Upper lobe of right lung (tissue), 1 donor: ENCODE measurements at regions of chr10 and their contacts with region 1.

Region 1: DNA sequence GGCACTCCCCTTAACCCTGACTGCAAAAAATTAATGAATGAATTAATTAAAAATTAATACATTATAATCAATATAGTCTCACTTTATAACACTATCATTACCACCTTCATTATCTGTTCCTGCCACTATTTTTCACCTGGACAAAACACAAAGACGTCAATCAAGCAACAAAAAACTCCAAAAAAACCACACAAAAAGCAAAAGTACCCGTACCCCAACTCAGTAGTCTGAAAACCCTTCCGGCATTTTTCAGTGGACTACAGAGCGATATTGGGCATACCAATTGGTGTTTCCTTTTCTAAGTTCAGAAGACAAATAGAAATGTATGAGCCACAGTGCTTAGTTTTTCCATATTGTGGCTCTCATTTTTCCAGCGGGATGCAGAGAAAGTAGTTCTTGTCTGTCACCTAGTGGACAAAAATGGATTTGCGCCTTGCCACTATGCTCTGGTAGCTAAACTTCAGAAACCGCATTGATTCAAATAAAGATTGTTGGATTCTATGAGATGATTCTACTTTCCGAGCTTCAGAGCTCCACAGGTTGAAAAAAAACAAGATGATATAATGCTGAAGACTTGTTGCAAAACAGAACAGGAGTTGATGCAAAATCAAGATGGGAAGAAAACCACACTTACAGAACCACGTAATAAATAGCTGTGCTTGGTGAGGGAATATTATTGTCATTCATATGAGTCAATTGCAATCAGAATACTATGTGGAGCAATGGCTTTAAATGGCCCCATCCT is 50.6 kb upstream of the ITGB1 start:
- DNase-seq: no peak
- ATAC-seq: peak; percentile 60
- H3K4me3 ChIP-seq: no peak overlapping the region
- H3K27ac ChIP-seq: no peak overlapping the region
- H3K4me1 ChIP-seq: peaks cover 21% of the 10 kb centered on the region
- H3K27me3 ChIP-seq: no peaks in the 10 kb centered on the region
- CTCF ChIP-seq: peak; percentile 100

Region 2: GRCh38 chr10:32795598-32796183 is 213.0 kb before region 1 on chr10:
- intact Hi-C with region 1: loop called (anchors 5 kb)
- DNase-seq: no peak
- ATAC-seq: peak; percentile 69
- H3K4me3 ChIP-seq: no peak overlapping the region
- H3K27ac ChIP-seq: no peak overlapping the region
- H3K4me1 ChIP-seq: no peaks in the 10 kb centered on the region
- H3K27me3 ChIP-seq: no peaks in the 10 kb centered on the region
- CTCF ChIP-seq: peak; percentile 70

Region 3: GRCh38 chr10:33047655-33048054 is 39.0 kb after region 1 on chr10:
- intact Hi-C with region 1: no loop called
- DNase-seq: no peak
- ATAC-seq: no peak
- H3K4me3 ChIP-seq: no peak overlapping the region
- H3K27ac ChIP-seq: no peak overlapping the region
- H3K4me1 ChIP-seq: no peaks in the 10 kb centered on the region
- H3K27me3 ChIP-seq: no peaks in the 10 kb centered on the region
- CTCF ChIP-seq: no peak

Region 4: GRCh38 chr10:33808475-33808874 is 799.8 kb after region 1 on chr10:
- intact Hi-C with region 1: no loop called
- DNase-seq: no peak
- ATAC-seq: no peak
- H3K4me3 ChIP-seq: no peak overlapping the region
- H3K27ac ChIP-seq: no peak overlapping the region
- H3K4me1 ChIP-seq: no peaks in the 10 kb centered on the region
- H3K27me3 ChIP-seq: no peaks in the 10 kb centered on the region
- CTCF ChIP-seq: no peak